Activated naive CD4-positive, alpha-beta T cell treated with anti-CD3 and anti-CD28 coated beads for 36 hours (primary cell): ENCODE measurements at regions of chr10 and their contacts with region 1.

Region 1: GRCh38 chr10:63268798-63269503 is 135.8 kb downstream of the NRBF2 start:
- DNase-seq: peak; percentile 91
- H3K4me3 Mint-ChIP-seq: peak overlapping the region; percentile 88
- H3K27ac Mint-ChIP-seq: peak overlapping the region; percentile 98
- H3K4me1 Mint-ChIP-seq: peaks cover 22% of the 10 kb centered on the region
- H3K27me3 Mint-ChIP-seq: no peaks in the 10 kb centered on the region

Region 2: DNA sequence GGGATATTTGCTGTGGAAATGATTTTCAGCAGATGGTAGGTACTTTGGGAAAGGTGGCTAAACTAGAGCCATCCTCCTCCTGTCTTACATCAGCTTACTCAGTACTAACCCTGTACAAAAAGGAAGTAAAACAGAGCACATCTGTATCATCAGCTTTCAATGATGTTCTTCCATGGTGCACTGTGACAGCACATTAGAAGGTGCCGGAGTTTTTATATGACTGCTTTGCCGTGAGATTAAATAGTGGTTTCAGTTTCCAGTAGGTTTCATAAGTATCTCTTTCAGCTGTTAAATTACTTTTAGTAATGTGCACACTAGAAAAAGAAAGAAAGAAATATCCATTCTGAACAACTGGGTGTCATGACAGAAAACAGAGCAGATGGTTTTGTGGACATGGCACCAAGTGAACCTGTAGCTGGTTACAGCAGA is 1281.0 kb before region 1 on chr10:
- CTCF ChIA-PET with region 1: no interaction called
- intact Hi-C with region 1: loop called (anchors 1 kb)
- DNase-seq: peak; percentile 64
- H3K4me3 Mint-ChIP-seq: peak overlapping the region; percentile 51
- H3K27ac Mint-ChIP-seq: peak overlapping the region; percentile 96
- H3K4me1 Mint-ChIP-seq: peaks cover 89% of the 10 kb centered on the region
- H3K27me3 Mint-ChIP-seq: no peaks in the 10 kb centered on the region

Region 3: GRCh38 chr10:62811159-62811875 is 457.6 kb before region 1 on chr10:
- CTCF ChIA-PET with region 1: no interaction called
- intact Hi-C with region 1: loop called (anchors 1 kb)
- DNase-seq: peak; percentile 91
- H3K4me3 Mint-ChIP-seq: peak overlapping the region; percentile 30
- H3K27ac Mint-ChIP-seq: peak overlapping the region; percentile 79
- H3K4me1 Mint-ChIP-seq: peaks cover 78% of the 10 kb centered on the region
- H3K27me3 Mint-ChIP-seq: no peaks in the 10 kb centered on the region

Region 4: GRCh38 chr10:63217120-63217605 is 51.8 kb before region 1 on chr10:
- CTCF ChIA-PET with region 1: interaction called, 13 read pairs
- intact Hi-C with region 1: loop called (anchors 2 kb)
- DNase-seq: no peak
- H3K4me3 Mint-ChIP-seq: no peak overlapping the region
- H3K27ac Mint-ChIP-seq: peak overlapping the region; percentile 13
- H3K4me1 Mint-ChIP-seq: peaks cover 49% of the 10 kb centered on the region
- H3K27me3 Mint-ChIP-seq: no peaks in the 10 kb centered on the region

Region 5: DNA sequence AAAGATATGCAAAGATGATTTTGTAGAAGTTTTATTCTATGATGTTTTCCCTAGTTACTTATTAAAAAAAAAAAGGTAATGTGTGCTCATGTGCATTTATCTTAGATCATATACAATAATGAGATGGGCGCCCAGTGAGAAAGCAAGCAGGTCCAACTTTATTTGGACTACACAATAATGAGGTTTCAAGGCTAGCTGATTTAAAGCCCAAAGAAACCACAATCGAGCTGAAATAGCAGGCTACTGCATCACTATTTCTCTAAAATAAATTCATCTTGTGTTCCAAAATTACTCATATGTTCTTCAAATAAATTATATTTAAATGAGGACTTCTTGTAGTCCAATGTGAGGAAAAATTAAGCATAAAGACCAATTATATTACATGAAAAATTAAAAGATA is 86.7 kb after region 1 on chr10:
- CTCF ChIA-PET with region 1: no interaction called
- intact Hi-C with region 1: loop called (anchors 1 kb)
- DNase-seq: no peak
- H3K4me3 Mint-ChIP-seq: no peak overlapping the region
- H3K27ac Mint-ChIP-seq: no peak overlapping the region
- H3K4me1 Mint-ChIP-seq: peaks cover 28% of the 10 kb centered on the region
- H3K27me3 Mint-ChIP-seq: no peaks in the 10 kb centered on the region

Region 6: DNA sequence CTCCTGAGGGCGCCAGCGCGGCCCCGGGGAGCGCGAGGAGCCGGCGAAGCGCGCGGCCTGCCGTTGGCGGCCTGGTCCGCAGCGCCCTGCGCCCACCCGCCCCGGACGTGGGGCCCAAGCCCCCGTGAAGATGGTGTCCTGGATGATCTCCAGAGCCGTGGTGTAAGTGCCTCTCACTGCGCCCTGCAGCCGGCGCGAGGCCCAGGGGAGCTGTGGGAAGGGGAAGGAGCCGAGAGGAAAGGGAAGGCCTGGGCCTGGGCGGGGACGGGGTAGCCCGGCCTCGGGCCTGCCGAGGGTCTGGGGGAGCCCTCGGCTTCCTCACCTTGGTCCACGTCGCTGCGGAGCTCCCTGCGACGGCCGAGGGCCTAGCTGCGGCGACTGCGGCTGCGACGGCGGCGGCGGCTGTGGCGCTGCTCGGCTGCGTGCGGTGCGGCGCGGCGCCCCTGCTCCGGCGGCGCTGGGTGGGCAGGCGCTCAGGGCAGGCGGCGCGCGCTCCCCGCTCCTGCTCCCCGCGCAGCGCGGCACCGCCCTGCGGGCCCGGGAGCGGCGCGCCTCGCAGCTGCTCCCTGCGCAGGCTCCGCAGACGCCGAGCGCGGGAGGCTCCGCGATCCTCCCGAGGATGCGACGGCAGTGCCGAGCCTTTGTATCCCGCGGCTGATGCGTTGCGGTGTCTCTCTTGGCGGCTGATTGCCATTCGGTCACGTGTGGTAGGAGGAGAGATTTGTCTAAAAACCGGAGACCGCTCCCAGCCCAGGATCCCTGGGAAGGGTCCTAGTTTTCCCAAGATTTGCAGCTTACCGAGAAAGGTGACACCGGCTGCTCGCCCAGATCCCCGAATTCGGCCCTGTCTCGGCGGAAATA is 252.7 kb after region 1 on chr10:
- CTCF ChIA-PET with region 1: no interaction called
- intact Hi-C with region 1: loop called (anchors 1 kb)
- DNase-seq: peak; percentile 59
- H3K4me3 Mint-ChIP-seq: peak overlapping the region; percentile 84
- H3K27ac Mint-ChIP-seq: peak overlapping the region; percentile 86
- H3K4me1 Mint-ChIP-seq: peaks cover 66% of the 10 kb centered on the region
- H3K27me3 Mint-ChIP-seq: no peaks in the 10 kb centered on the region

Region 7: GRCh38 chr10:63707254-63707910 is 438.4 kb after region 1 on chr10:
- CTCF ChIA-PET with region 1: no interaction called
- intact Hi-C with region 1: loop called (anchors 1 kb)
- DNase-seq: peak; percentile 58
- H3K4me3 Mint-ChIP-seq: no peak overlapping the region
- H3K27ac Mint-ChIP-seq: peak overlapping the region; percentile 27
- H3K4me1 Mint-ChIP-seq: peaks cover 17% of the 10 kb centered on the region
- H3K27me3 Mint-ChIP-seq: no peaks in the 10 kb centered on the region